B cell (primary cell): ENCODE measurements at regions of chr11 and their contacts with region 1.

Region 1: GRCh38 chr11:95296621-95297025 is 65.6 kb upstream of the SESN3 start:
- DNase-seq: peak; percentile 84
- ATAC-seq: peak; percentile 90
- H3K4me3 ChIP-seq: peak overlapping the region in 4 of 5 experiments; percentile 10 to 53 (median 26)
- H3K4me3 Mint-ChIP-seq: peak overlapping the region; percentile 82
- H3K27ac ChIP-seq: peak overlapping the region; percentile 81 to 82
- H3K27ac Mint-ChIP-seq: peak overlapping the region; percentile 95
- H3K4me1 ChIP-seq: peaks cover 44 to 47% of the 10 kb centered on the region in 2 donors
- H3K4me1 Mint-ChIP-seq: peaks cover 48% of the 10 kb centered on the region
- H3K27me3 ChIP-seq: no peaks in the 10 kb centered on the region
- H3K27me3 Mint-ChIP-seq: no peaks in the 10 kb centered on the region
- CTCF ChIP-seq: peak; percentile 9

Region 2: GRCh38 chr11:95254131-95254704 is 42.4 kb before region 1 on chr11:
- CTCF ChIA-PET with region 1: interaction called, 17 read pairs
- POLR2A ChIA-PET with region 1: interaction called, 3 read pairs
- intact Hi-C with region 1: loop called (anchors 2 kb)
- DNase-seq: peak; percentile 93
- ATAC-seq: peak; percentile 95
- H3K4me3 ChIP-seq: peak overlapping the region; percentile 8 to 59 (median 34)
- H3K4me3 Mint-ChIP-seq: peak overlapping the region; percentile 86
- H3K27ac ChIP-seq: peak overlapping the region; percentile 90 to 93
- H3K27ac Mint-ChIP-seq: peak overlapping the region; percentile 97
- H3K4me1 ChIP-seq: peaks cover 60 to 76% of the 10 kb centered on the region in 2 donors
- H3K4me1 Mint-ChIP-seq: peaks cover 80% of the 10 kb centered on the region
- H3K27me3 ChIP-seq: no peaks in the 10 kb centered on the region
- H3K27me3 Mint-ChIP-seq: no peaks in the 10 kb centered on the region
- CTCF ChIP-seq: no peak

Region 3: GRCh38 chr11:95279921-95280868 is 16.4 kb before region 1 on chr11:
- CTCF ChIA-PET with region 1: interaction called, 6 read pairs
- POLR2A ChIA-PET with region 1: no interaction called
- intact Hi-C with region 1: loop called (anchors 1 kb)
- DNase-seq: peak; percentile 61
- ATAC-seq: peak; percentile 70
- H3K4me3 ChIP-seq: peak overlapping the region in 2 of 5 experiments; percentile 16 to 48
- H3K4me3 Mint-ChIP-seq: peak overlapping the region; percentile 83
- H3K27ac ChIP-seq: peak overlapping the region; percentile 77 to 84
- H3K27ac Mint-ChIP-seq: peak overlapping the region; percentile 94
- H3K4me1 ChIP-seq: peaks cover 23 to 35% of the 10 kb centered on the region in 2 donors
- H3K4me1 Mint-ChIP-seq: peaks cover 40% of the 10 kb centered on the region
- H3K27me3 ChIP-seq: no peaks in the 10 kb centered on the region
- H3K27me3 Mint-ChIP-seq: no peaks in the 10 kb centered on the region
- CTCF ChIP-seq: no peak

Region 4: DNA sequence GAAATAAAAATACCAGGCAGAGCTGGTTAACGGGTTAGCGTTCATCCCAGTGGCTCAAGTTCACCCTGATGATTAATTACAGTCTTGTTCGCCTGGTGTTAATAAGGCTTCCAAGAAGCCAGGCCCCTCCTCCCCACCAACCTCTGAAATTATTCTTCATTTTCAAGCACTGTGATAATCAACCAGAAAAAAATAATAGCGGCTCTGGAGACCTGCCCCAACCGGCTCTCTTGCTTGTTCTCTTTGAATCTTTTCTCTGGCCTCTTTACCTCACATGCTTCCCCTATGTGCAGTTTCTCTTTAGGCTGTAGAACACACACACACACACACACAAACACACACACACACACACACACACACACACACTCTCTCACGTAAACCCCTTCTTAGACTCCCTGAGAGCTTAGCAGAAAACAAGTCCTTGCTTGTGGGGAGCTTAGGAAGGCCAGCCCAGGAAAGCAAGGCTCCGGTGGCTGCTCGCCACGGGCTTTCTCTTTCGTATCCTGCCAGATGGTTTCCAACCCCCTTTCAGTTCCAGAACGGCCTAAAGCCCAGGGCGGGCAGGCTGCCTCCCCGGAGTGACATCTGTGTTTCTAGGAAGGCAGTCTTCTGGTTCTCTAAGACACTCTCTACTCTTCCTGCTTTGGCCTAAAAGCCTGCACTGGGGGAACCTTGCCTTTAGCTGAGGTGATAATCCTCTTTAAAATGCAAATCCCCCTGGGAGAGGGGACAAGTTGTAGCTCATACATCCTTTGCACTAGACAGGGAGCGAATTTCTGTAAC is 40.7 kb after region 1 on chr11:
- CTCF ChIA-PET with region 1: interaction called, 14 read pairs
- POLR2A ChIA-PET with region 1: interaction called, 3 read pairs
- intact Hi-C with region 1: loop called (anchors 2 kb)
- DNase-seq: peak; percentile 80
- ATAC-seq: peak; percentile 58
- H3K4me3 ChIP-seq: peak overlapping the region in 4 of 5 experiments; percentile 5 to 51 (median 38)
- H3K4me3 Mint-ChIP-seq: no peak overlapping the region
- H3K27ac ChIP-seq: peak overlapping the region; percentile 67 to 83
- H3K27ac Mint-ChIP-seq: no peak overlapping the region
- H3K4me1 ChIP-seq: peaks cover 21 to 32% of the 10 kb centered on the region in 2 donors
- H3K4me1 Mint-ChIP-seq: peaks cover 5% of the 10 kb centered on the region
- H3K27me3 ChIP-seq: no peaks in the 10 kb centered on the region
- H3K27me3 Mint-ChIP-seq: no peaks in the 10 kb centered on the region
- CTCF ChIP-seq: no peak